Posterior cingulate gyrus (tissue), 11 donors: ENCODE measurements at regions of chr12 and their contacts with region 1.

Region 1: DNA sequence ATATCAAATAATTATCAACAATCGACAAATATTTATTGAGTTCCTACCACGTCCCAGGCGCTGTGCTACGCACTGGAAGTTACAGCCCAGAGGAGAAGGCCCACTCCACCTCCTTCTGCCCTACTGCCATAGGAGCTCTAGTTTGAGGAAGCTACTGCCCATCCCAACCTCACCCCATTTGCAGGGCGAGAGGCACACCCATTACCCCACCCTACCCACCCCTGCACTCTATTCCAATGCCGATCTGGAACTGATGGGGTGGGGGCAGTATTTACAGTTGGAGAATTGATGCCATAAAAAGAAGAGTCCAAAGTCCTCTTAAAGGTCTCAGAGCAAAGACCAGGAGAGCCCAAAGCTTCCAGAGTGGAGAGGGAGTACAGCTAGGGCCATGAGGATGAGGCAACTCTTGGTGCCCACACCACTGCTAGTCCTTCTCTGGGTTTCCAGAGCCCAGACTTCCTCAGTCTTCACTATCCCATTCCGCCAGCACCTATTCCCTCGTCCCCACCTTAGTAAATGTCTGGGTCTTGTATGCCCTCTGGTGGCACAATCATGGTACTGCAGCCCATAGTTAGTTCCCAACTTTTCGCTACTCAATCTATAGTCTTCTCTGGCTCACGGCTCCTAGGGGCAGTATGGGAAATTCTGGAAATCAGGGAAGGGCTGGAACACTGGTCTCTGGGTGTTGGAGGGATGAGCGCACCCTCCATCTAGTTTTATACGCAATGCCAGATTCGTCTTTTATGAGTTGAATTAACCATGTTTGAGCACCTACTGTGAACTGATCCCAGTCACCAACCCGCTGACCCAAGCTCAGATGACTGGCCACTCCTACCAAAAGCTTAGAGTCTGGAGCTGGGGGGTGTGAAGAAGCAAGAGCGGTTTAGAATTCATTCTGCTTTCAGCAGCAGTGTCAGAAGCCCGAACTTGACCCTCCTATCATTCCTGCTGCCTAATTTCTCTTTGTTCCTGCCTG is 6.9 kb upstream of the ADCY6 start:
- DNase-seq: peak in 8 of 10 donors; percentile 61 to 91 (median 79)

Region 2: DNA sequence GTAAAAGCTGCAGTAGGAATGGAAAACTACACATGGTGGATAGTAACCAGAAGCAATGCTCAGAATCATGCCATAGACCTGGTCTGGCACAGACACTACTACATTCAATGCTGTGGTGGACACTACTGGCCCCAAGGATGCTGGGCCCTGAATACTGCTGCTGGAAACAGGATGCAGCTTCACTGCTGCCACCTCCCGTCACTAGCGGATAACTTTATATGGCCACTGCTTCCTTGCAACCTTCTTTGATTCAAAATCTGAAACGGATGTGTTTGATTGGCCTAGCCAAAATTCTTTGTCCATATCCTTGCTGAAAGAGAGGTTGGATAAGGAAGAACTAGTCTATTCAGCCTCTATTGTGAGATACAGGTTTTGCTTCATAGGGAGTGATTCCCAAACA is 37.5 kb before region 1 on chr12:
- intact Hi-C with region 1: loop called (anchors 1 kb)
- DNase-seq: peak in 1 of 10 donors; percentile 12